Caco-2 (cell line): ENCODE measurements at regions of chr2 and their contacts with region 1.

Region 1: DNA sequence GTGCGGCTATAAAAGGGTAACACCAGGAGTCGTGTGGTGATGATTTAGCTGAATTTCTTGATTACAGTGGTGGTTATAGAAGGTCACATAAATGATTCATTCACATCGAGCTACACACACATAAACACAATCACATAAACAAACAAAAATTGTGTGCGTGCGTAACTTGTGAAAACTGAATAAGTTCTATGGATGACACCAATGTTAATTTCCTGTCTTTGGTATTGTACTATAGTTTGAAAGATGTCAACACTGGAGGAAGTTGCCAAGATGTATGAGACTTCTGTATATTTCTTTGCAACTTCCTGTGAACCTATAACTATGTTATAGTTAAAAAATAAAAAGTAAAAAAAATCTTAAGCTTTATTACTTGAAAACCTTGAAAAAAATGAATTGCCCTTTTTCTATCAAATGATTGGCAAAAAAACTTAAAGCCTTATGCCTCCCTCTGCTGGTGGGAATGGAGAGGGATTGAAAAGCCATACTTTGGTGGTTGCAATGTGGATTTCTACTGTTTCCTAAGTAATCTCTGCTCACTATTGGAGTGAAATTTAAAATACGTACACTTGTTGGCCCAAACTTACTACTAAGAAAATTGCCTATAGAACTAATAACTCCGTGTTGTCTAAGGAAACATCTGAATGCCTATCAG is 227.7 kb downstream of the RPIA start:
- DNase-seq: peak in 1 of 2 experiments; percentile 40
- H3K4me3 ChIP-seq: no peak overlapping the region
- H3K4me3 Mint-ChIP-seq: no peak overlapping the region
- H3K27ac Mint-ChIP-seq: no peak overlapping the region
- H3K4me1 ChIP-seq: no peaks in the 10 kb centered on the region
- H3K4me1 Mint-ChIP-seq: no peaks in the 10 kb centered on the region
- H3K27me3 ChIP-seq: no peaks in the 10 kb centered on the region; the same call in 1 of the 2 replicates
- H3K27me3 Mint-ChIP-seq: peaks cover 9% of the 10 kb centered on the region
- CTCF ChIP-seq: peak; percentile 52 to 74

Region 2: DNA sequence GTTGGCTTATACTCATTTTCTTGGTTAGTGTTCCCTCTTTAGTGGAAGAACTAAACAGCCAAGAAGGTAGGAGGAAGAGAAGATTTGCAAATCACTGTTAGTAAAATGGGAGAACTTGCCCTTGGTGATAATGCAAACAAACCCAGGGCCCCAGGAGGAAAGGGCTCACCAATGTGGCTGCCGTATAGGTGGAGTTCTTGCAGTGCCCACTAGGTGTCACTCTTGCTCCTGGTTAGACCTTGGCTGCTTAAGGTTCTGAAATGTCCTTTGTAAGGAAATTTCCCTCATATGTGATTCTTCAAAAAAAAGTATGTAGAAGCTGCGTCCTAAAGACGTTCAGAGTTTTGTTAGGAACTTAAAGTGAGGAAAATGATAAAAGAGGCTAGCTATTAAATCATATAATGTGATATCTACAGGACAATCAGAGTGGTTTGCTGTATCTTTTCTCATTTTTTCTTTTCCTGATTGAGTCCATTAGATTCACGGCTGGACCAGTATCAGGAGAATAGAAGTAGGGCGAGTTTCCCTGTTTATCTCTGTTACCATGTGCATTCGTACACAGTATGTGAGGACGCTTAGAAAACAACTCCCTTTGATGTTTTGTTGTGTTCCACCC is 179.1 kb before region 1 on chr2:
- CTCF ChIA-PET with region 1: no interaction called
- POLR2A ChIA-PET with region 1: no interaction called
- intact Hi-C with region 1: loop called (anchors 1 kb)
- DNase-seq: peak; percentile 75 to 83
- H3K4me3 ChIP-seq: no peak overlapping the region
- H3K4me3 Mint-ChIP-seq: no peak overlapping the region
- H3K27ac Mint-ChIP-seq: no peak overlapping the region
- H3K4me1 ChIP-seq: no peaks in the 10 kb centered on the region
- H3K4me1 Mint-ChIP-seq: no peaks in the 10 kb centered on the region
- H3K27me3 ChIP-seq: no peaks in the 10 kb centered on the region
- H3K27me3 Mint-ChIP-seq: no peaks in the 10 kb centered on the region
- CTCF ChIP-seq: peak; percentile 88 to 92

Region 3: GRCh38 chr2:88765154-88765900 is 153.9 kb before region 1 on chr2:
- CTCF ChIA-PET with region 1: no interaction called
- POLR2A ChIA-PET with region 1: no interaction called
- intact Hi-C with region 1: no loop called
- DNase-seq: no peak
- H3K4me3 ChIP-seq: no peak overlapping the region
- H3K4me3 Mint-ChIP-seq: no peak overlapping the region
- H3K27ac Mint-ChIP-seq: no peak overlapping the region
- H3K4me1 ChIP-seq: no peaks in the 10 kb centered on the region
- H3K4me1 Mint-ChIP-seq: no peaks in the 10 kb centered on the region
- H3K27me3 ChIP-seq: no peaks in the 10 kb centered on the region
- H3K27me3 Mint-ChIP-seq: no peaks in the 10 kb centered on the region
- CTCF ChIP-seq: no peak

Region 4: GRCh38 chr2:88874063-88874657 is 45.1 kb before region 1 on chr2:
- CTCF ChIA-PET with region 1: no interaction called
- POLR2A ChIA-PET with region 1: no interaction called
- intact Hi-C with region 1: loop called (anchors 1 kb)
- DNase-seq: peak in 1 of 2 experiments; percentile 58
- H3K4me3 ChIP-seq: no peak overlapping the region
- H3K4me3 Mint-ChIP-seq: no peak overlapping the region
- H3K27ac Mint-ChIP-seq: no peak overlapping the region
- H3K4me1 ChIP-seq: no peaks in the 10 kb centered on the region
- H3K4me1 Mint-ChIP-seq: no peaks in the 10 kb centered on the region
- H3K27me3 ChIP-seq: no peaks in the 10 kb centered on the region; the same call in 1 of the 2 replicates
- H3K27me3 Mint-ChIP-seq: peaks cover 17% of the 10 kb centered on the region
- CTCF ChIP-seq: peak; percentile 78 to 85

Region 5: DNA sequence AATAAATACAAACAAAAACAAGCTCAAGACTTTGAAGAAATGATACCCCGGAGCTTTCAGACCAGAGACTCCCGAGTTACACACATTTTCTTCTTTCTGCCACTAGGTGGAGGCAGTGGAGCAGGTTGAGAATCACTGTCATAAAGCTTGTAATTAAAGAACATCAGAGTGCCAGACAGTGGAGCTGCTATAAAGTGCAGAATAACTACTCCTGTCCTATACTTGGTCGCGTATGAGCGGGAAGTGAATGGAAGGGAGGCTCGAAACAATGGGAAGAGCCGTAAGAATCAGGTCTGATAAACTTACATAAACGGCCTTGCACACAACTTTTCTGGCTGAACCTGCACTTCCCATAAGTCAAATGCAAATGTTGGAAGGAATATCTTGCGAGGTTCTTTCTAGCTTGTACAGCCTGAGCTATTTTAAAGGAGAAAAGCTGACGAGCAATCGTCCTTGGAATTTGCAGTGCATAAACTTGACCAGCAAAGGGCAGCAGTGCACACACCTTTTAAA is 38.7 kb before region 1 on chr2:
- CTCF ChIA-PET with region 1: interaction called, 3 read pairs
- POLR2A ChIA-PET with region 1: no interaction called
- intact Hi-C with region 1: loop called (anchors 1 kb)
- DNase-seq: peak; percentile 44 to 57
- H3K4me3 ChIP-seq: no peak overlapping the region
- H3K4me3 Mint-ChIP-seq: no peak overlapping the region
- H3K27ac Mint-ChIP-seq: no peak overlapping the region
- H3K4me1 ChIP-seq: no peaks in the 10 kb centered on the region
- H3K4me1 Mint-ChIP-seq: no peaks in the 10 kb centered on the region
- H3K27me3 ChIP-seq: no peaks in the 10 kb centered on the region
- H3K27me3 Mint-ChIP-seq: peaks cover 13% of the 10 kb centered on the region
- CTCF ChIP-seq: peak; percentile 74 to 81

Region 6: DNA sequence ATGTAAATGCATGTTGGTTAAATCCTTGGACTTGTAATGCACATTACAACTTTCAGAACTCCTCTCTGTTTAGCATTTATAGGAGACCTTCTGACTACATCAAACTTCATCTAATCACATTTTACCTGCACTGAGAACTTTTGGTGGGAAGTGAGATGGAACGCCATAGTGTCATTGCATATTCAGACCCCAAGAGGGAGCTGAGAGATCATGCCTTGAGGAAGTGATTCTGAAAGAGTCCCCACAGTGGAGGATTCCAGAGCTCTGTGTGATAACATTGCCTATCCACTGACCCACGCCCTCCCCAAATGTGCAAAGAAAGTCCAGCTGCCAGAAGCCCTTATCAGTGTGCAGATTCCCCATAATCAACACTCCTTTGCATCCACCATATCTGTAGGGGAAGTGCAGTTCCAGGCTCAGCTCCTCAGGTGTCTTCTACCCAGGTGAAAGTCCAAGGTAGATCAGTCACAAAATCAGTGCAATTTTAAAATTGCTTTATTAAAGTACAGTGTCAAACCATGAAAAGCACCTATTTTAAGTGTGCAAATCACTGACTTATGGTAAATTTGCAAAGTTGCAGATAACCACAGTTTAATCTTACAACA is 15.4 kb before region 1 on chr2:
- CTCF ChIA-PET with region 1: interaction called, 6 read pairs
- POLR2A ChIA-PET with region 1: no interaction called
- intact Hi-C with region 1: loop called (anchors 1 kb)
- DNase-seq: peak; percentile 50 to 62
- H3K4me3 ChIP-seq: no peak overlapping the region
- H3K4me3 Mint-ChIP-seq: no peak overlapping the region
- H3K27ac Mint-ChIP-seq: no peak overlapping the region
- H3K4me1 ChIP-seq: no peaks in the 10 kb centered on the region
- H3K4me1 Mint-ChIP-seq: no peaks in the 10 kb centered on the region
- H3K27me3 ChIP-seq: no peaks in the 10 kb centered on the region
- H3K27me3 Mint-ChIP-seq: peaks cover 6% of the 10 kb centered on the region
- CTCF ChIP-seq: peak; percentile 76 to 86